Activated CD4-positive, alpha-beta memory T cell treated with anti-CD3 and anti-CD28 coated beads, Interleukin-2, amount 10 ng/mL, durations not matched to agents 7 days and 5 days (primary cell): ENCODE measurements at regions of chr2 and their contacts with region 1.

Region 1: DNA sequence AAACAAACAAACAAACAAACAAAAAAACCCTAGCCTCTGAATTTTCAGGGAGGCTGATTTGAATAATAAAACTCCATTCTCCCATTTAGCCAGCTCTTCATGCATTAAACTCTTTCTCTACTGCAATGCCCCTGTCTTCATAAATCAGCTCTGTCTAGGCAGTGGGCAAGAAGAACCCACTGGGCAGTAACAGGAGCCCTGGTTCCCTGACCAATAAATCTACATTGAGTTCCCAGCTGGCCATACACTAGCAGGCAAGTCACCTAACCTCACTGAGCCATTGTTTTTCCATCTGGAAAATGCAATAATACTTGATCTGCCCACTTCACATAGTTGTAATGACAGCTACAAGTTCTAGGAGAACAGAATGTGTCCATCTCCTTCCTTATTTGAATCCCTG is 57.6 kb upstream of the YPEL5 start:
- DNase-seq: no peak
- H3K4me3 Mint-ChIP-seq: no peak overlapping the region
- H3K27ac Mint-ChIP-seq: no peak overlapping the region
- H3K4me1 Mint-ChIP-seq: no peaks in the 10 kb centered on the region
- H3K27me3 Mint-ChIP-seq: peaks cover 56% of the 10 kb centered on the region

Region 2: GRCh38 chr2:30115141-30115980 is 26.2 kb after region 1 on chr2:
- CTCF ChIA-PET with region 1: interaction called, 21 read pairs
- POLR2A ChIA-PET with region 1: no interaction called
- DNase-seq: peak; percentile 70
- H3K4me3 Mint-ChIP-seq: no peak overlapping the region
- H3K27ac Mint-ChIP-seq: no peak overlapping the region
- H3K4me1 Mint-ChIP-seq: peaks cover 3% of the 10 kb centered on the region
- H3K27me3 Mint-ChIP-seq: peaks cover 2% of the 10 kb centered on the region